ENCODE measurements at regions of chr3 and their contacts with region 1.

Region 1: DNA sequence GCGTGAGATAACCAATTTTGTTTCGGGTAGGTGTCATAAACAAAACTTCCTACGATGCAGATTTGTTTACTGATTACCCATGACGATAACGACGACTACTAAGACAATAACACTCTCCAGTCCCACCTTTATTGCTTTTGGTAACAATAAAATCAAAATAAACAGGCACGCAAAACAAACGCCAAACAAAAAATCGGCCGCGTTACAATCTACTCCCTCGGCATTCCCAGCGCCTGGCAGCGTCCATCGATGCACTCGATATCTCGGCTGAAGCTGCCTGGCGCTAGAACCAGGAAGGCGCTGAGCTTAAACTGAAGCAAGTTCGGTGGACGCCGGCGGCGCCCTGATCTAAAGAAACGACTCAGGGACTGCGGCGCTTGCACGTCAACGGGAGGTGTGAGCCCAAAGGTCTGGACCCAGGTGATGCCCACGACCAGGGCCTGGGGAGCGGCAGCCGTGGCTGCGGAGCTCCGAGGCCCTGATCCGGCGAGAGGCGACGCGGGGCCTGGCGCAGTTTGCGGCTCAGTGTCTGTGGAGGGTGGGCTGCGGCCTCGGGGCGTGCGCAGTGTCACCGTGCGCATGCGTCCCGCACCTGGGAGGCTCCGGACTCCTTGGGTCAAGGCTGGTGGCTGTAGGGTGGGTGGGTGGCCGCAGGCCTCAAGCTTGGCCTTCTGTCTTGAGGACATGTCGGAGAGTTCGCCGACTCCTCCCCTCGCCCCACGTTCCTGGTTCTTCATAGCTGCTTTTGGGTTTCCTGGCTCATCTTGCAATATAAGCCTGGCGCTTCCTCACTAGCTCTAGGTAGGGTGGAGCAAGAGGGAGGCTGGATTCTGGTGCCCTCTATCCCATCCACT is at the start of gene RSRC1:
- DNase-seq: peak; percentile 72 to 76 (median 74)
- H3K4me3 ChIP-seq: peak within 1 kb of the TSS; percentile 71 to 92 (median 88)
- H3K4me3 Mint-ChIP-seq: peak within 1 kb of the TSS; percentile 95 to 96
- H3K27ac ChIP-seq: peak within 1 kb of the TSS; percentile 42 to 77
- H3K27ac Mint-ChIP-seq: peak within 1 kb of the TSS; percentile 62 to 91 (median 89)
- H3K4me1 ChIP-seq: peaks cover 38 to 51% of the 10 kb centered on the region in 2 donors
- H3K4me1 Mint-ChIP-seq: peaks cover 51% of the 10 kb centered on the region
- H3K27me3 ChIP-seq: peaks cover 41 to 45% of the 10 kb centered on the region in 2 donors
- H3K27me3 Mint-ChIP-seq: peaks cover 45 to 49% (median 48%) of the 10 kb centered on the region in 3 donors
- CTCF ChIP-seq: no peak
- polyA plus RNA-seq, gene RSRC1: 6.6 to 31.7 (median 15.1) TPM

Region 2: GRCh38 chr3:158167737-158168471 is 57.9 kb after region 1 on chr3:
- intact Hi-C with region 1: loop called in 1 of 2 experiments (anchors 5 kb)
- DNase-seq: peak; percentile 82 to 90 (median 90)
- H3K4me3 ChIP-seq: no peak overlapping the region
- H3K4me3 Mint-ChIP-seq: no peak overlapping the region
- H3K27ac ChIP-seq: peak overlapping the region in 1 of 2 donors; percentile 26
- H3K27ac Mint-ChIP-seq: peak overlapping the region; percentile 38 to 93 (median 71)
- H3K4me1 ChIP-seq: peaks cover 11 to 19% of the 10 kb centered on the region in 2 donors
- H3K4me1 Mint-ChIP-seq: peaks cover 19% of the 10 kb centered on the region
- H3K27me3 ChIP-seq: no peaks in the 10 kb centered on the region
- H3K27me3 Mint-ChIP-seq: peaks cover 0 to 3% (median 0%) of the 10 kb centered on the region in 3 donors
- CTCF ChIP-seq: no peak

Region 3: DNA sequence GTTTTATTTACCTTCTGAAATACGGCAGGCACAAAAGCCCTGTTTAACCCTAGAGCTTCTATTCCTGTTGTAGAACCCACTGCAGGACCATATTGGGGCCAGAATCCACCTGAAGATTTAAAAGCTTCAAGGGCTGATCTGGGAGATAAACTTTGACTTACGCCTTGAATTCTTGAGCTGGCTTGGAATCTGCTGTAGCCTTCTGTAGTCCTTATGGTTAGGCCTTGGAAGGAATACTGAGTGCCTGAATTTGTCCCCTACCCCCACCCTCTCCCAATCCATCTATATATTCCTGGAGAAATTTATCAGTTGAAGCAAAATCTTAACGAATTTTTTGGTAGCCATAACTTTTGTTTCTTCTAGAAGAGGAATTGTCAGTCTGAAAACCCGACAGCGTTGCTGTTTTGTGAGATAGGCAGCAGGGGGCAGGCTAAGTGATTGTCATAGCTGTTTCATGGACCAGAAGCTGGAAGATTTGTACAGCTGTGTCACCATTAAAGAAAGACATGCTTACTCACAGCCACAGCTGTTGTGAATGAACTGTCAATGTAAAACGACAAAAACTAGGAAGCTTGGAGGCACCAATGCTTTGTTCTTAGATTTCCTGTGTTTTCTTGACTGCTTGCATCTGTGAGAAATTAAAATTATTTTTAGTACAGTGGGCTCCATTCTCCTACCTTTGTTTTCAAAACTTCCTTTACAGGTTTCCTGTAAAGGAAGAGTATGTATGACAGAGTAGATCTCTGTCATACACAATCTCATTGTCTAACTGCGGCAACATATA is 549.6 kb after region 1 on chr3:
- intact Hi-C with region 1: no loop called
- DNase-seq: peak; percentile 31 to 51 (median 44)
- H3K4me3 ChIP-seq: no peak overlapping the region
- H3K4me3 Mint-ChIP-seq: no peak overlapping the region
- H3K27ac ChIP-seq: no peak overlapping the region
- H3K27ac Mint-ChIP-seq: peak overlapping the region in 1 of 7 donors; percentile 19
- H3K4me1 ChIP-seq: no peaks in the 10 kb centered on the region
- H3K4me1 Mint-ChIP-seq: no peaks in the 10 kb centered on the region
- H3K27me3 ChIP-seq: no peaks in the 10 kb centered on the region
- H3K27me3 Mint-ChIP-seq: no peaks in the 10 kb centered on the region
- CTCF ChIP-seq: peak; percentile 72